CD8-positive, alpha-beta T cell (primary cell): ENCODE measurements at regions of chr9 and their contacts with region 1.

Region 1: DNA sequence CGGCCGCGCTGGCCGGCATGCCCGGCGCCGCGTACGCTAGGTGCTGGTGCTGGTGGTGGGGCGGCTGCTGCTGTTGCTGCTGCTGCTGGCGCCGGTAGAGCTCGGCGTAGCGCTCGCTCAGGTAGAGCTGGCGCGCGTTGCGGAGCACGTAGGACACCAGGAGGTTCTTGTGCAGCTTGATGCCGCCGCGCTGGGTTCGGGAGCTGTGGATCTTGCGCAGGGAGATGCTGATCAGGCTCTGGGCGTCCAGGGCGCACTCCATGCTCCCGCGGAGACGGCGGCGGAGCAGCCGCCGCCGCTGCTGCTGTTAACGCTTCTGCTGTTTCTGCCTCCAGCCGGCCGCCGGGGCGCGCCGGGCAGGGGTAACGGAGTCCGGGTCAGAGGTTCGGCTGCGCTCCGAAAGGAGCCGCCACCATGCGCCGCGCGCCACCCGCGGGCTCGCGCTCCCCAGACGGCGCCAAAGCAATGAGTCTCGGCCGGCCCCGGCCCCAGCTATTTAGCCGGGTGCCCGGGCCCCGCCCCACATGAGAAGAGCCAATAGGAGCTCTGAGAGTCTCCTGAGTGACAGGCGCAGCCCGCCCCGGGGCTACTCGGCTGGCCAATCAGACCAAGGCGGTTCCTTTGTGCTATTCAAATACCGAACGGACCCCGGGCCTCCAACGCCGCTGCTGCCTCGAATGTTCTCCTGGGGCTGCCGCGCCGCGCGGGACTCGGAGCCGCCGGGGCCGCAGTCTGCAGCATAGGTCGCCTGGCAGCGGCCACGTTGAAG is at the start of gene IER5L:
- DNase-seq: peak; percentile 89 to 97 (median 93)
- ATAC-seq: peak; percentile 85
- H3K4me3 ChIP-seq: peak within 1 kb of the TSS; percentile 70 to 86
- H3K4me3 Mint-ChIP-seq: peak within 1 kb of the TSS; percentile 92
- H3K27ac ChIP-seq: peak within 1 kb of the TSS in 1 of 2 experiments; percentile 50
- H3K27ac Mint-ChIP-seq: peak within 1 kb of the TSS; percentile 82
- H3K4me1 ChIP-seq: peaks cover 8% of the 10 kb centered on the region
- H3K4me1 Mint-ChIP-seq: peaks cover 10% of the 10 kb centered on the region
- H3K27me3 ChIP-seq: peaks cover 0 to 6% of the 10 kb centered on the region in 2 experiments
- H3K27me3 Mint-ChIP-seq: no peaks in the 10 kb centered on the region
- CTCF ChIP-seq: no peak
- total RNA-seq, gene IER5L: 21.7 to 25.1 TPM

Region 2: GRCh38 chr9:129131300-129132145 is 46.5 kb before region 1 on chr9:
- CTCF ChIA-PET with region 1: interaction called, 32 read pairs
- POLR2A ChIA-PET with region 1: interaction called, 4 read pairs
- intact Hi-C with region 1: no loop called
- DNase-seq: peak; percentile 77 to 92 (median 85)
- ATAC-seq: peak; percentile 100
- H3K4me3 ChIP-seq: no peak overlapping the region
- H3K4me3 Mint-ChIP-seq: no peak overlapping the region
- H3K27ac ChIP-seq: peak overlapping the region in 1 of 2 experiments; percentile 1
- H3K27ac Mint-ChIP-seq: peak overlapping the region; percentile 41
- H3K4me1 ChIP-seq: peaks cover 3% of the 10 kb centered on the region
- H3K4me1 Mint-ChIP-seq: peaks cover 5% of the 10 kb centered on the region
- H3K27me3 ChIP-seq: no peaks in the 10 kb centered on the region
- H3K27me3 Mint-ChIP-seq: no peaks in the 10 kb centered on the region
- CTCF ChIP-seq: peak; percentile 96

Region 3: DNA sequence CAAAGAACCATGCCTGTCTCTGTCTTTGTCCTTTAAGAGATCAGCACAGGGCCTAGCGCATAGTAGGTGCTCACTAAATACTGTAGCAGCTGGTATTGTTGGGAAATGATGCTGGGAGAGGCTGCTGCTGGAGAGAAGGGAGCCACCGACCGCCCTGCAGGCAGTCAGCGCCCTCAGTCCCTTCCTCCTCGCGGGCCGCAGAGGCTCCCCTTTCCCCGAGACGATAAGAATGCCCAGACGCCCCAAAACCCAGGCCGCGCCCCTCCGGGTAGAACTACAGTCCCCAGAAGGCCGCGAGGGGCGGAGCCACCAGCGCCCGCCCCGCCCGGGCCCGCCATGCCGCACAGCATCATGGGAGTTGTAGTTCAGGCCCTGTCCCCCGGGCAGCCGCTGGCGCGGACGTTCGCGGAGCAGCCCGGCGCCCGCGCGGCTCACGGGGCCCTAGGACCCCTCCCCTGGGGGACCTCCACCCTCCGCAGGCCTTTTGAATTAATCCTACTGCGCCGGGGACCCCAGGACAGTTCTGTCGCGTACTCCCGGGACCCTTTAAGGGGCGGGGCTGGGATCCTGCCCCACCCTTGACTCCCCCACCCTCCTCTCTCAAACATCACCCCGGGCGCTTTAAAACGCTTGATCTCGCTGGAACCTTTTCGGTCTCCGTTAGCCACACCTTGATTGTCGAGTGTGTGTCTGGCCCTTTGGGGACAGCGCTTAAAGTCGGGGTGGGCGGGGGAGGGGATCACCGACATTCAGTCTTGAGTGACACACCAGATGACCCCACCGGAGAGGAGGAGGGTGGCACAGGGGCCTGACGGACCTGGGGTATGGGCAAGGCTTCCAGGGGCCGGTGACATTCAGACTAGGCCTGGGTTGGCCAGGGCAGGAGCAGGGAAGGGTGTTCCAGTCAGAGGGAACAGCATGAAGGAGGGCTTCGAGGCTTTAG is 24.9 kb after region 1 on chr9:
- CTCF ChIA-PET with region 1: interaction called, 5 read pairs
- POLR2A ChIA-PET with region 1: interaction called, 6 read pairs
- intact Hi-C with region 1: loop called (anchors 1 kb)
- DNase-seq: peak; percentile 84 to 96 (median 90)
- ATAC-seq: peak; percentile 93
- H3K4me3 ChIP-seq: peak overlapping the region; percentile 56 to 95
- H3K4me3 Mint-ChIP-seq: peak overlapping the region; percentile 78
- H3K27ac ChIP-seq: peak overlapping the region; percentile 62 to 65
- H3K27ac Mint-ChIP-seq: peak overlapping the region; percentile 79
- H3K4me1 ChIP-seq: peaks cover 30% of the 10 kb centered on the region
- H3K4me1 Mint-ChIP-seq: peaks cover 28% of the 10 kb centered on the region
- H3K27me3 ChIP-seq: no peaks in the 10 kb centered on the region
- H3K27me3 Mint-ChIP-seq: no peaks in the 10 kb centered on the region
- CTCF ChIP-seq: no peak

Region 4: DNA sequence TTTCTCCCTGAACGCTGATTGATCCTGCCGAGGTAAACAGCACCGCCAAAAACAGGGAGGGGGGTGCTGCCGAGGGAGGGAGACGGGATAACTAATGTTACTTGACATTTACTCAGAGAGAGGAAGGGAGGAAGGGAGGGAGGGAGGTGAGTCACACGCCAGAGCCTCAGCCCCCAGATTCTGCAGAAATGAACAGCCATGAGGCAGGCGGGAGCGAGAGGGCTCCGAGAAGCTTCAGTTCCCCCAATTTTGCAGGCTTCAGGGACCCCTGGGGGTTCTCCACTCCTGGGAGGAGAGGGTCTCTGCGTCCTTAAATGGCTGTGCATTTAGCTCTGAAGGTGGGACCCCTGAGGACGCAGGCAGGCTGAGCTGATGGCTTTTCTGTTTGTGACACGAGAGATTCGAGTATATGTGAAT is 59.2 kb after region 1 on chr9:
- CTCF ChIA-PET with region 1: interaction called, 14 read pairs
- POLR2A ChIA-PET with region 1: interaction called, 56 read pairs
- intact Hi-C with region 1: loop called (anchors 1 to 2 kb)
- DNase-seq: peak in 8 of 9 experiments; percentile 36 to 79 (median 66)
- ATAC-seq: peak; percentile 70
- H3K4me3 ChIP-seq: peak overlapping the region; percentile 51 to 66
- H3K4me3 Mint-ChIP-seq: peak overlapping the region; percentile 88
- H3K27ac ChIP-seq: peak overlapping the region; percentile 56 to 62
- H3K27ac Mint-ChIP-seq: peak overlapping the region; percentile 94
- H3K4me1 ChIP-seq: peaks cover 50% of the 10 kb centered on the region
- H3K4me1 Mint-ChIP-seq: peaks cover 70% of the 10 kb centered on the region
- H3K27me3 ChIP-seq: no peaks in the 10 kb centered on the region
- H3K27me3 Mint-ChIP-seq: no peaks in the 10 kb centered on the region
- CTCF ChIP-seq: no peak

Region 5: GRCh38 chr9:129333953-129334724 is 156.2 kb after region 1 on chr9:
- CTCF ChIA-PET with region 1: interaction called, 4 read pairs
- POLR2A ChIA-PET with region 1: interaction called, 5 read pairs
- intact Hi-C with region 1: loop called in 1 of 2 experiments (anchors 5 kb)
- DNase-seq: peak in 6 of 9 experiments; percentile 11 to 56 (median 42)
- ATAC-seq: peak; percentile 50
- H3K4me3 ChIP-seq: peak overlapping the region; percentile 12 to 48
- H3K4me3 Mint-ChIP-seq: peak overlapping the region; percentile 69
- H3K27ac ChIP-seq: no peak overlapping the region
- H3K27ac Mint-ChIP-seq: peak overlapping the region; percentile 69
- H3K4me1 ChIP-seq: peaks cover 36% of the 10 kb centered on the region
- H3K4me1 Mint-ChIP-seq: peaks cover 31% of the 10 kb centered on the region
- H3K27me3 ChIP-seq: peaks cover 0 to 10% of the 10 kb centered on the region in 2 experiments
- H3K27me3 Mint-ChIP-seq: no peaks in the 10 kb centered on the region
- CTCF ChIP-seq: no peak

Region 6: DNA sequence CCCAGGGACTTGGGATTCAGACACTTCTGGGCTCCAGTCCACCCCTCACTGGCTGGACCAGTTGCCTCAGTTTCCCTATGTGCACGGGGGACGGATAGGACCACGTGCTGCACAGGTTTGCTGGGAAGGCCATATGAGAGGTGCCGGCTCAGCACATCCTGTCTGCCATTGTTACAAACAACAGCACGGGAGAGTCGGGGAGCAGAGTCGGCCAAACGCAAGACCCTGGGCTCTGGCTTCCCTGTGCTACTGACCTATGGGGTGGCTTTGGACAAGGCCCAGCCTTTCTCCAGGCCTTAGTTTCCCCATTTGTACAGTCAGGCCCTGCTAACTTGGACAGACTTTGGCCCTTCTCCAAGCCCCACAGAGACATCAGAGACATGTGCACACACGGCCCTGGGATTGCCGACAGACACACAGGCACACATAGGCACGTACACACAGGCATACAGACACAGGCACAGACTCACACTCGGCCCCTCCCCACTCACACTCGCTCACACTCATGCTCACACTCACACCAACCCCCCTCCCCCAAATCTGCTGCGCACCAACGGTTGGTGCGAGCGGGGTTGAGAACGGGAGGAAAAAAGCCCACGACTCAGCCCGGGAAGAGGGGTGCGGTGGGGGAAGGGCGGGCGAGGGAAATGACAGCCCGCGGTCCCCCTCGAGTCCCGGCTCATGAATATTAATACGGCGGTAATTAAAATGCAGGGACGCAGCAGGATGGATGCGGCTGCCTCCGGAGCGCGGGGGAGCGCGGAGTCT is 309.9 kb after region 1 on chr9:
- CTCF ChIA-PET with region 1: no interaction called
- POLR2A ChIA-PET with region 1: interaction called, 3 read pairs
- intact Hi-C with region 1: loop called (anchors 1 to 2 kb)
- DNase-seq: peak in 3 of 9 experiments; percentile 64 to 80 (median 64)
- ATAC-seq: peak; percentile 14
- H3K4me3 ChIP-seq: peak overlapping the region; percentile 55 to 58
- H3K4me3 Mint-ChIP-seq: peak overlapping the region; percentile 80
- H3K27ac ChIP-seq: peak overlapping the region; percentile 72 to 83
- H3K27ac Mint-ChIP-seq: peak overlapping the region; percentile 92
- H3K4me1 ChIP-seq: peaks cover 56% of the 10 kb centered on the region
- H3K4me1 Mint-ChIP-seq: peaks cover 42% of the 10 kb centered on the region
- H3K27me3 ChIP-seq: no peaks in the 10 kb centered on the region
- H3K27me3 Mint-ChIP-seq: no peaks in the 10 kb centered on the region
- CTCF ChIP-seq: no peak

Region 7: DNA sequence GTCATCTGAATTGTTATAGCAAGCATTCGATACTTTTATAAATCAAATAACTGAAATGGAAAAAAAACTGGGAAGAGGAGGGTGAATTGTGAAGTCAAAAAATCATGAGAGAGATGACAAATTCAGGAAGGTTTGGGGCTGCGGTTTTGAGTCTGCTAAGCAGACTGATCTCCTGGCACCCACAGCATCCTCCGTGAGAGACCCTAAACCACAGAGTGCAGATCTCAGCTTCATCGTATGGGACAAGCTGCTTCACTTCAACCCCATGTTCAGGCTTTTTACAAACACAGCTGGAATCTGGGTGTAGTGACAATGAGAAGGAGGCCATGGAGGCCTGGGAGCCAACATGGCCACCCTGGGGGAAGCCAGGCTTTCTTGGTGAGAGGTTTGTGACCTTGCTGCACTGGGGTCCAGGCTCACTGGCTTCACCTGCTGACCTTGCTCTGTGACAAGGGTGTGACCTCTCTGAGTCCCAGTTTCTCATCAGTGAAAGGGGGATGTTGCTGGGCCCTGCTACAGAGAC is 676.7 kb after region 1 on chr9:
- CTCF ChIA-PET with region 1: no interaction called
- POLR2A ChIA-PET with region 1: no interaction called
- intact Hi-C with region 1: no loop called
- DNase-seq: peak in 4 of 9 experiments; percentile 58 to 77 (median 62)
- ATAC-seq: peak; percentile 74
- H3K4me3 ChIP-seq: peak overlapping the region in 1 of 2 experiments; percentile 7
- H3K4me3 Mint-ChIP-seq: peak overlapping the region; percentile 62
- H3K27ac ChIP-seq: peak overlapping the region in 1 of 2 experiments; percentile 36
- H3K27ac Mint-ChIP-seq: peak overlapping the region; percentile 81
- H3K4me1 ChIP-seq: peaks cover 40% of the 10 kb centered on the region
- H3K4me1 Mint-ChIP-seq: peaks cover 76% of the 10 kb centered on the region
- H3K27me3 ChIP-seq: no peaks in the 10 kb centered on the region
- H3K27me3 Mint-ChIP-seq: no peaks in the 10 kb centered on the region
- CTCF ChIP-seq: no peak